Tibial artery (tissue), 4 donors: ENCODE measurements at regions of chr18 and their contacts with region 1.

Region 1: DNA sequence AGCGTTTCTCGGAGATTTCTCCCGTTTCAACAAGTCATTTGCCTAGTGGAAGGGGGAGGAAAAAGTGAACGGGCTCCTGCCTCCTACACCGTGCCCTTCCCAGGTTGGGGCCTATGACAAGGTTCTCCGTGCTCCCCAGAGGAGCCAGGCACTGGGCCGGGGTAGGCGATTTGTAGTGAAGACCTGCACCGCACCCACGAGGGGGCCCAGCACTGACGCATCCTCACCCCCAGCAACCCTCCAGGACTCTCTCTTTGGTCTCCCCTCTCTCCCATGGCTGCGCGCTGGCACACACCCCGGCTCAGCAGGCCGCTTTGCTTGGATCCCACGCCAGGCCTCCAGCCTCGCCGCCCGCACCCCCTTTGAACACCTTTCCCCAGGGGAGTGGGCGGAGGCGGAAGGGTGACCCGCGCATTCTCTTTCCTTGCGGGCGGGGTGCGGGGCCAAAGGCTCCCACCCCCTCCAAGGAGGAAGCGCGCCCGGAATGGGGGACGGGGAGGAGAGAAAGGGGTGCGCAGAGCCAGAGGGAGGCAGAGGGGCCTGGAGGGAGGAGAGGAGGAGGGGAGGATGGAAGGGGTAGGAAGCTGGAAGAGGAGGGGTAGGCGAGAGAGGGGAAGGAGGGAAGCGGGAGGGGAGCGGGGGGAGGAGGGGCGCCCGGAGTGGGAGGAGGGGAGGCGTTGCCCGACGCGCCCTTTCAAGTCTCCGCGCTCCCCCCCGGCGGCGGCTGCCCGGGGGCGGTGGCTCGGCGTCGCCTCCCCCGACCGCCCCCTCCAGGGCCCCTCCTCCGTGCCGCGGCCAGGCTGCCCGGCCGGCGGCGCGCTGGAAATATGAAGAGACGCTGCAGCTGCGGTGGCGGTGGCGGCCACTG is at the start of gene APCDD1:
- DNase-seq: peak; percentile 73 to 87
- H3K4me3 ChIP-seq: peak within 1 kb of the TSS; percentile 69 to 79
- H3K27ac ChIP-seq: peak within 1 kb of the TSS; percentile 89
- H3K4me1 ChIP-seq: peaks cover 0 to 36% (median 18%) of the 10 kb centered on the region in 4 donors
- H3K27me3 ChIP-seq: no peaks in the 10 kb centered on the region
- CTCF ChIP-seq: no peak

Region 2: GRCh38 chr18:9851511-9851910 is 602.5 kb before region 1 on chr18:
- intact Hi-C with region 1: no loop called
- DNase-seq: no peak
- H3K4me3 ChIP-seq: no peak overlapping the region
- H3K27ac ChIP-seq: no peak overlapping the region
- H3K4me1 ChIP-seq: peaks cover 0 to 62% (median 27%) of the 10 kb centered on the region in 4 donors
- H3K27me3 ChIP-seq: no peaks in the 10 kb centered on the region
- CTCF ChIP-seq: no peak

Region 3: GRCh38 chr18:10015941-10016819 is 437.9 kb before region 1 on chr18:
- intact Hi-C with region 1: loop called (anchors 10 kb)
- DNase-seq: no peak
- H3K4me3 ChIP-seq: no peak overlapping the region
- H3K27ac ChIP-seq: peak overlapping the region; percentile 67 to 72
- H3K4me1 ChIP-seq: peaks cover 0 to 46% (median 26%) of the 10 kb centered on the region in 4 donors
- H3K27me3 ChIP-seq: no peaks in the 10 kb centered on the region
- CTCF ChIP-seq: peak in 1 of 2 experiments; percentile 34

Region 4: DNA sequence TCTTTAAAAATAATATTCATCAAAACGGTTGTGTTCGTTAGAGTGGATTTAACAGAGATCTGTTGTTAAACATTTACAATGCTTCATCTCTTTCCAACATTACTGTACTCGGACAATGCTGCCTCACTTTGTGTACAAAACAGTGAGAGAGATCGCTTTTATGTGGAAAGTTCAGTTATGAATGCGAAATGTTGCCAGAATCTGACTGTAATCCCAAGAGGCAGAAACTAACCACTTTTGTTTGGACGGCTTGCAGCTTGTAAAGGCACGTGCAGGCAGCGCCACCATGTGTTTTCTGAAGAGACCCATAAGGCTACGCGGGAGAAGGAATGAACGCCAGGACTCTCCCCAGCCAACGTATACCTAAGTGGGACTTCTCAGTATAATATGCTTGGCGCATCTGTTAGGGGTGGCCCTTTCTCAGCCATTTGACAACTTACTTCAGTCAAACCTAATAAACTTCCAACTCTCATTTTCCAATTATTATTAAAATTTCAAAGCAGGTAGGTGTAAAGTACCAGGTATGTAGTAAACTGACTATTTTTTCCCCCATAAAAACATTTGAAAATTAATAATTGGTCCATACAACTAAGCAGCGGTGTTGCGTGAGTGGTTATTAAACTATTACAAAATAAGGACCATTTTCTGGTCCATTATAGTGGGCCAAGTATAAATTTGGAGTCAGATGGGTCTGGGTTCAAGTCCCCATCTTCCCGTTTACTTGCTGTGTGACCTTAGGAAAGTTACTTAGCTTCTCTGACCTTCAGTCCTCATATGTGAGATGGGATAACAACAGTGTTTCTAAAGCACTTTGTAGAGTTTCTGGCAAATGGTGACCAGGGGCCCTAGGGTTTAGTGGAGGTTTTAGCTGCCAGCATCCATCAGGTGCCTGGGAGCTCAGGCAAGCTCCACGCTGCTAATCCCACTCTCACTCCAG is 66.2 kb after region 1 on chr18:
- intact Hi-C with region 1: loop called (anchors 5 kb)
- DNase-seq: peak; percentile 89 to 92
- H3K4me3 ChIP-seq: no peak overlapping the region
- H3K27ac ChIP-seq: peak overlapping the region in 1 of 2 donors; percentile 62
- H3K4me1 ChIP-seq: peaks cover 0 to 36% (median 33%) of the 10 kb centered on the region in 4 donors
- H3K27me3 ChIP-seq: no peaks in the 10 kb centered on the region
- CTCF ChIP-seq: peak; percentile 82 to 87